Heart left ventricle (tissue), 16 donors: ENCODE measurements at regions of chr20 and their contacts with region 1.

Region 1: DNA sequence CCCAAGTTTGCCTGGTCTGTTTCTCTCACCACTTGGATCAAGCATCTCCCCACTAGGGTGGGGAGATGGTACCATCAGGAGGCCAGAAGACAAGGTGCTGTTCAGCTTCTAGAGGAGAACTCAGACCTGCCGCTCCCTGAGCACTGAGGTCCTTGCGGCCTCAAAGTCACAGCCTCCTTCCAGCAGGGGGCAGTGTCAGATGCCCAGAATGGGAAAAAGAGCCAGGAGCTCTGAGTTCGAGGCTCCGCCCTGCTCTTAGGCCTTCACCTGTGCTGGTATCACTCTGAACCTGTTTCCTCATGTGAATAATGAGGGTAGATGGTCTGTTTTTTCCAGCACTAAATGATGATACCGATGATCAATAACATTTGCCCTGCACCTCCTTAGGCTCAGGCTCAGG is 68.7 kb downstream of the TOX2 start:
- DNase-seq: peak in 1 of 5 donors; percentile 6
- ATAC-seq: no peak
- H3K4me3 ChIP-seq: no peak overlapping the region
- H3K27ac ChIP-seq: peak overlapping the region in 1 of 12 donors; percentile 11
- H3K4me1 ChIP-seq: peaks cover 0 to 12% (median 0%) of the 10 kb centered on the region in 12 donors
- H3K27me3 ChIP-seq: peaks cover 0 to 6% (median 0%) of the 10 kb centered on the region in 9 donors
- CTCF ChIP-seq: peak in 7 of 12 donors; percentile 4 to 37 (median 18)
- POLR2A ChIP-seq: no peak

Region 2: DNA sequence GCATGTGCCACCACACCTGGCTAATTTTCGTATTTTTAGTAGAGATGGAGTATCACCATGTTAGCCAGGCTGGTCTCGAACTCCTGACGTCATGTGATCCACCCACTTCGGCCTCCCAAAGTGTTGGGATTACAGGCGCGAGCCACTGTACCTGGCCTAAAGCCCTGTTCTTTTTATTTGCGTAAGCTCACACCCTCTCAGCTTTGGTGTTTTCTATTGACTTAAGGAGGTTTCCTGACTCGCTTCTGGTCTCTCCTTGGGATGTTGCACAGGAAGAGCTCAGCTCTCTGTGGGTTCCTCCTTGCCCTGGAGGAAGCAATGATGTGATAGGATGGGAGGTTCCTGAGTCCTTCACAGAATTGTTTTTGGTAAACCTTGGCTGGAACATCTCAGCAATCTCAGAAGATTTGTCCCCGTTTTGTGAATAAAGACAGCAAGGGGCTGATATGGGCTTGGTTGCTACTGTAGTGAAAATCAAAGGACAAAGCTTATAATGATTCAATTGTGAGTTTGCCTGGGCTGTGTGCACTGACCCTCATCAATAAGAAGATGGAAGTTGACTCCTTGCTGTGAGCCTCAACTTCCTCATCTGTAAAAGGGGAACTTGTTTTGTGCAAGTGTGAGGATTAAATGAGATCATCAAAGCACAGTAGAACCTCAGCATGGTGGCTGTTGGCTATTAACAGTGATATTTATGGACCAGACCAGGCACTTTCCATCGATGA is 41.7 kb before region 1 on chr20:
- intact Hi-C with region 1: loop called in 1 of 10 experiments (anchors 1 kb)
- DNase-seq: no peak
- ATAC-seq: peak; percentile 14 to 78 (median 62)
- H3K4me3 ChIP-seq: no peak overlapping the region
- H3K27ac ChIP-seq: peak overlapping the region in 5 of 12 donors; percentile 24 to 86 (median 56)
- H3K4me1 ChIP-seq: peaks cover 0 to 80% (median 10%) of the 10 kb centered on the region in 12 donors
- H3K27me3 ChIP-seq: peaks cover 0 to 4% (median 0%) of the 10 kb centered on the region in 9 donors
- CTCF ChIP-seq: no peak
- POLR2A ChIP-seq: no peak